ENCODE measurements at regions of chr17 and their contacts with region 1.

Region 1: DNA sequence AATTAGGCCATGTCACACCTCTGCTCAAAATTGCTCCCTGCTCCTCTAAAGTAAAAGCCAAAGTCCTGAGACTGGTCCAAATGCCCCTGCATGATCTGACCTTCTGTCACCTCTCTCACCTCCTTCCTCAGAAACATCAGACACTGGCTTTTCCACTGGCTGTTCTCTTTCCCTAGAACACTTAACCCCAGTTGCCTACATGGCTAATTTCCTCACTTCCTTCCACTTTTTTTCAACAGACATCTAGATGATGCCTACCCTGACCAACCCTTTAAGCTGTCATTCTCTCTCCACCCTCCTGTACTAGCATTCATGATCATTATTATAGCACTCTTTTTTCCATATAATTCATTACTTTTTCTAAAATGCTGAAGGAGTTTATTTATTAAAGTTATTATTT is 31.0 kb downstream of the CCT6B start:
- DNase-seq: no peak
- ATAC-seq: no peak
- H3K4me3 ChIP-seq: no peak overlapping the region
- H3K27ac ChIP-seq: no peak overlapping the region
- H3K4me1 ChIP-seq: no peaks in the 10 kb centered on the region
- H3K27me3 ChIP-seq: no peaks in the 10 kb centered on the region
- CTCF ChIP-seq: no peak
- POLR2A ChIP-seq: no peak

Region 2: GRCh38 chr17:34840750-34841149 is 89.5 kb before region 1 on chr17:
- intact Hi-C with region 1: no loop called
- DNase-seq: no peak
- ATAC-seq: no peak
- H3K4me3 ChIP-seq: no peak overlapping the region
- H3K27ac ChIP-seq: no peak overlapping the region
- H3K4me1 ChIP-seq: no peaks in the 10 kb centered on the region
- H3K27me3 ChIP-seq: peaks cover 0 to 2% (median 0%) of the 10 kb centered on the region in 9 donors
- CTCF ChIP-seq: no peak
- POLR2A ChIP-seq: no peak

Region 3: DNA sequence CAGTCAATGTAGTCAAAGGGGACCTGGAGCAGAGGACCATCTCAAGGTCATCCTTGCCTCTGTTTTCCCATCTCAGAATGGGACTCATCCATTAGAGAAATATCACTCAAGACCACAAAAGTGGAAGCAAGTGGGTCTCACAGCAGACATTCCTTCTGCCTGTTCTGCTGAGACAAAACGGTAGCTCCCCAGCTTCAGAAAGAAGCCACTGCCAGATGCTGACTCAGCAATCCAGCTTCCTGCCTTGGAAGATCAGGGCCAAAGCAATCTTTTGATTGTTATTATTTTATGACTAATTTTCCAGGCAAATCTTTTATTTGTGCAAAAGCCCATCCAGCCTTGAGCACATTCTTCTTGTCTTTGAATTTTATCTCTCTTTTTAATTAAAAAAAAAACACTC is 55.8 kb before region 1 on chr17:
- intact Hi-C with region 1: loop called in 1 of 10 experiments (anchors 10 kb)
- DNase-seq: no peak
- ATAC-seq: no peak
- H3K4me3 ChIP-seq: no peak overlapping the region
- H3K27ac ChIP-seq: no peak overlapping the region
- H3K4me1 ChIP-seq: no peaks in the 10 kb centered on the region
- H3K27me3 ChIP-seq: peaks cover 0 to 4% (median 0%) of the 10 kb centered on the region in 9 donors
- CTCF ChIP-seq: no peak
- POLR2A ChIP-seq: no peak

Region 4: DNA sequence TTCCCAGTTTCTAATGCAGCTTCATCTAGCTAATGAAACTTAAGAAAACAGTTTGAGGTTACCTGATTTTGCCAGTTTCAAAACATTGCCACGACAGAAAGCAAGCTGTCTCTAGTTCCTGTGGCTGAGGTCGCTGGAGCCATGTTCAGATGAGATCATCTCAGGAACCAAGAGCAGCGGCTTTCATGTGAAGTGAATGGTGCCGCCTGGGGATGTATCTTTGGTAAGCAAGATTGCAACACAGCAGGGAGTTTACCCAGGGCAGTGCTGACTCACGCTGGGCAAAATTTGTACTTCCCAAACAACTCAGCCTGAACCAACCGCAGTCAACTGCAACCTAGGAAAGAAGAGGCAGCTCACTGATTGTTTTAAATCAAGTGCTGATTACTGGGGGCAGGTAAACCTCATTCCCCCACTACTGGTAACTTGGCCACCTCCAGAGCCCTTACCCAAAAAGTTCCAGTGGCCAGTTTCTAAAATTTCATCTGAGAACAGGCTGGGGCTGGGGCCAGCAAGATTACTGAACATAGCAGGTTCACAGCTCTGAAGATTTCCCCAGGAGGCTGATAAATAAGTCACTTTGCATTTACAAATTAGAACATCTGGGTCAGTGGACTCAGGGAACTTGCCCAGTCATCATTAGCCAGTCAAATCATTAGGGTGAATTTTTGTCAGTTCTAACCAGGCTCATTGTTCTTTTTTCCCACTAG is 133.4 kb after region 1 on chr17 and contains the start of gene RFFL:
- intact Hi-C with region 1: no loop called
- DNase-seq: peak; percentile 76 to 89 (median 83)
- ATAC-seq: peak; percentile 97 to 100 (median 99)
- H3K4me3 ChIP-seq: peak within 1 kb of the TSS in 9 of 12 donors; percentile 26 to 44 (median 34)
- H3K27ac ChIP-seq: peak within 1 kb of the TSS; percentile 37 to 94 (median 79)
- H3K4me1 ChIP-seq: peaks cover 0 to 34% (median 10%) of the 10 kb centered on the region in 12 donors
- H3K27me3 ChIP-seq: no peaks in the 10 kb centered on the region
- CTCF ChIP-seq: peak in 7 of 12 donors; percentile 17 to 48 (median 26)
- POLR2A ChIP-seq: peak in 1 of 2 donors; percentile 43
- total RNA-seq, gene RFFL: 10.1 to 21.6 (median 13.5) TPM

Measured in heart left ventricle (tissue), 16 donors.